ENCODE measurements at regions of chr2 and their contacts with region 1.

Region 1: DNA sequence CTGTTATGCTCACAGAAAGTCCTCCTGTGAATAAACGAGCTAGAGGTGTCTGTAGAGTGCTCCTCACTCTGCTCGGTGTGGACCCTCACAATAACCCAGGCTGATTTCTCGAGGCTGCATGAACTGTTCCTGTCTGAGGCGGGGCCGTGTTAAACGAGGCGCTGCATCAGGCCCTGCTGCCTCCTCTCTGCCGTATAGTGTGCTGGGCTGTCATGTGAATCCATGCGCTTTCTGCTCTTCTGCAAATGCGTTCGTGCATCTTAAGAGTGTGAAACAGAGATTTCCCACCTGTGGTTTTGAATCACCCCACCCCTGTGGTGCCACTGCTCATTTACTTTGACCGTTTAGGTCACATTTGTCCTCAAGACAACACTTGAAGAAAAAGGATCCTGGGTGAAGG is 26.2 kb downstream of the TRAF3IP1 start:
- DNase-seq: no peak
- H3K4me3 ChIP-seq: no peak overlapping the region
- H3K27me3 ChIP-seq: no peaks in the 10 kb centered on the region
- CTCF ChIP-seq: no peak

Region 2: DNA sequence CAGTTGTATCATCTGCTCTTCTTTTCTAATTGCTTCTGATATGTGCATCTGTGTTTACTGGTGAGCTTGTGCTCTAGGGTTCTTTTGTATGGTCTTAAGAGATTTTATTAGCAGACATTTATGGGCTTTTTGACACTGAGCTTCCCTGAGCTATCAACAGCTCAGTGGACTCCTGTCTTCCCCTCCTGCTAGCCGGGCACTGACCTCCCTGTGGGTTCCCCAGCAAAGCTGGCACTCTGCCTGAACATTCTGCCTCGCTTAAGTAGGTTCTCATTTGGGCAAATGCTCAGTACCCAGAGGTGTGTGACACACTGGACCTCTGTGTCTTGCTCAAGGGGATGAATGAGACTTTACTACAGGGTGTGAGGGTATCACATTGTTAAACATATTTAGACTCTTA is 10.4 kb before region 1 on chr2:
- CTCF ChIA-PET with region 1: interaction called, 3 read pairs
- POLR2A ChIA-PET with region 1: interaction called, 10 read pairs
- DNase-seq: no peak
- H3K4me3 ChIP-seq: no peak overlapping the region
- H3K27me3 ChIP-seq: no peaks in the 10 kb centered on the region
- CTCF ChIP-seq: no peak

Measured in BJ (cell line).